Activated T-helper 1 cell treated with anti-CD3 and anti-CD28 coated beads, Interleukin-12 subunit alpha, Interleukin-12 subunit beta, Interleukin-2, Interleukin-4 antibody, amounts not matched to agents 30 ng/mL and 10 ng/mL and 1 ng/mL, durations not matched to agents 14 hours and 24 hours and 36 hours (primary cell): ENCODE measurements at regions of chr10 and their contacts with region 1.

Region 1: DNA sequence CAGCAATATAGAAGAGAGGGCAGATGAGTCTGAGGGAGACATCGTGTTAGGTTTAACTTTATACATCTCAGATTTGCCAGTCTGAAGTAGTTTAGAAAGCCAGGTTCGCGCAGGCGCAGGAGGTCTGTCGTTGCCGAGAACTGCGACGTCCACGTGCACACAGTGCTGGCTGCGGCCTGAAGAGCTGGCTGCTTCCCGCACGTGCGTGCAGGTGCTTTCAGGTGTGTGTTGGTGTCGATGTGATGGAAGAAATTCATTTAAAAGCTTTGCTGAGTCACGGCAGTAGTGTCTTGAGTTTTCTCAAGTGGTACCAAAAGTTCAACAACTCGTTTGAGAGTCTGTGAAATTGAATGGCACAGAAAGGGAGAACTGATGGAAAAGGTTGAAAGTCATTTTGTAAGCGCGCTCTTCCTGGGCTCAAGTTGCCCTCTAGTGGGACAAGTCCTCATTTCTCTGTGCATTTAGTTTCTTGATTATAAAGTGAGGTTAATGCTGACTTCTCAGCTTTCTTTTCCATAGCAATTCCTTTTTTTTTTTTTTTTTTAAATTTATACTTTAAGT is 18.6 kb downstream of the WDR37 start:
- DNase-seq: no peak
- H3K4me3 Mint-ChIP-seq: no peak overlapping the region
- H3K27ac Mint-ChIP-seq: peak overlapping the region; percentile 15
- H3K4me1 Mint-ChIP-seq: peaks cover 11% of the 10 kb centered on the region
- H3K27me3 Mint-ChIP-seq: no peaks in the 10 kb centered on the region

Region 2: GRCh38 chr10:1061930-1062774 is 12.7 kb before region 1 on chr10:
- intact Hi-C with region 1: loop called (anchors 1 kb)
- DNase-seq: no peak
- H3K4me3 Mint-ChIP-seq: peak overlapping the region; percentile 59
- H3K27ac Mint-ChIP-seq: peak overlapping the region; percentile 80
- H3K4me1 Mint-ChIP-seq: peaks cover 75% of the 10 kb centered on the region
- H3K27me3 Mint-ChIP-seq: no peaks in the 10 kb centered on the region

Region 3: DNA sequence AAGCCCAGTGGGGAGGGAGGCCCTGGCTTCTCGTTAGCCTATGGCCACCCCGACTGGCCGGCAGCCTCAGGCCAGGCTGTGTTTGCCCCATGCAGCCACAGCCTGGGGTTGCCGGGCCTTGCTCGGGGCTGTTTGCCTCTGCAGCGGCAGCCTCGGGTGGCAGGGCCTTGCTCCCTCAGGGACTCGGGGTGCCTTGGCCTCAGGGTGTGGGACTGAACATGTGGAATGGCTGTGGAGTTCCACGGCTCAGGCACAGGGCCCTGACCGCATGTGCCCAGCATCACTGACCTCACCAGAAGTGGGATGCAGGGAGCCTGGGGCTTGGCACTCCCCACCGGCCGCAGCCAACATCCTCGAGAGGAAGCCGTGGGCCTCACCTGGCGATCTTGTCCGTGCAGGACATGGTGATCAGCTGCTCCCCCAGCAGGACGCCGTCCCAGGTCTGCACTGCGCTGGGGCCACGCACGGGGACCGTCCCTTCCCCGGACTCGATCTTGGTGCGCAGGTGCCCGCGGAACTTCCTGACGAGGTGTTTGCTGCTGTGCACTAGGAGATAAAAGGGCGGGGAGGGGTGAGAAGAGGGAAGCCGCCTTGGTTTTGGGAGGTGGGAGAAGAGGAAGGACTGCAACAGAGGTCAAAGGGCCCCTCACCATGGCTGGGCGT is 141.9 kb after region 1 on chr10:
- intact Hi-C with region 1: no loop called
- DNase-seq: no peak
- H3K4me3 Mint-ChIP-seq: no peak overlapping the region
- H3K27ac Mint-ChIP-seq: no peak overlapping the region
- H3K4me1 Mint-ChIP-seq: no peaks in the 10 kb centered on the region
- H3K27me3 Mint-ChIP-seq: no peaks in the 10 kb centered on the region

Region 4: DNA sequence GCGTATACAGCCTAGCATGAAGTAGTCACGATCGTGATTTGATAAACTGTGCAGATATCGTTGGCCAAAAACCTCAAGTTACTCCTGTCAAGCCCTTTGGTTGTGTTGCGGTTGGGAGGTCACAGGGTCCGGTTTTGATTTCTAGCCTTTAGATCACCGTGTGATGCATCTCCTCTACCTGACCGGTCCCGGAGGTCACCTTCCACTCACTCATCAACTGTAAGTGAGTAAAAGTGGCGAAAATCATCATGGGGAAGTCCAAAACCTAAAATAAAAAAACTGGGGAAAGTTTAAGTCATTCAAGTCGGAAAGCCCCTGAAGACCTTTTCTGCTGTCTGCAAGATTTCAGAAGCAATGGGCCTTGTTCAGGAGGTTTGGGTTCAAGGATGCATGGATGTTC is 599.7 kb after region 1 on chr10:
- intact Hi-C with region 1: no loop called
- DNase-seq: no peak
- H3K4me3 Mint-ChIP-seq: no peak overlapping the region
- H3K27ac Mint-ChIP-seq: no peak overlapping the region
- H3K4me1 Mint-ChIP-seq: no peaks in the 10 kb centered on the region
- H3K27me3 Mint-ChIP-seq: no peaks in the 10 kb centered on the region